GM13977 (cell line): ENCODE measurements at regions of chr11 and their contacts with region 1.

Region 1: DNA sequence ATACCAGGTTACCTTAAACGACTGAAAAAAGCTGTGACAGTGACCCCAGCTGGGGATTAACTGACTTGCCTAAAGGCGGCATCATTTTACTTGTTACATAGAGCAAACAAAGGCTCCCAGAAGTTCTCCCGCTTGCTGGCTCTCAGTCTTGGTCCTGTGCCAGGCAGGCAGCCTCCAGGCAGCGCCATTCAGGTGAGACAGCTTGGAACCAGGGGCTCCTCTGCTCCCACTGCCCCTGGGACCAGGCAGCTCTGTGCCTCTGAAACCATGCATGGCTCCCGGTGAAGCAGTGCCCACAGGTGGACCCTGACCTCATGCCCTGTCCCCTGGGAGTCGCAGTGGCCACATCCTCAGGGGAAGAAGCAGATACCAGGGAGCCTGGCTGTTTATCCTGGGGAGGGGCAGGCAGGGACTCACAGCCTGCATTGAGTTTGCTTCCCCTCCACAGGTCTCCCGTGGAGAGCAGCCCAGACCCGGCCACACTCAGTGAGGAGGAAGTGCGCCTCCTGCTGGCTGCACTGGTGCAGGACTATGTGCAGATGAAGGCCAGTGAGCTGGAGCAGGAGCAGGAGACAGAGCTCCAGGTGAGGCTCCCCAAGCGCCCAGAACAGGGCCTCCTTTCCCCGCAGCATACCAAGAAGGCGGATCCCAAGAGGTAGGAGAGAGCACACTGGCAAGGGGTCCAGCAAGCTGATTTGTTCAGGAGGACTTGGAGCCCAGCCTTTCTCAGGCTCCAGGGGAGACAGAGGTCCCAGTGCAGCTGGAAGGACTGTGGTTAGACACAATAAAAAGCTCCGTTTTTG is 15.6 kb upstream of the CYP2R1 start:
- DNase-seq: peak; percentile 41
- CTCF ChIP-seq: peak; percentile 92

Region 2: GRCh38 chr11:14537134-14537599 is 370.4 kb before region 1 on chr11:
- in situ Hi-C with region 1: loop called (anchors 10 kb)
- DNase-seq: peak; percentile 61
- CTCF ChIP-seq: peak; percentile 79

Region 3: DNA sequence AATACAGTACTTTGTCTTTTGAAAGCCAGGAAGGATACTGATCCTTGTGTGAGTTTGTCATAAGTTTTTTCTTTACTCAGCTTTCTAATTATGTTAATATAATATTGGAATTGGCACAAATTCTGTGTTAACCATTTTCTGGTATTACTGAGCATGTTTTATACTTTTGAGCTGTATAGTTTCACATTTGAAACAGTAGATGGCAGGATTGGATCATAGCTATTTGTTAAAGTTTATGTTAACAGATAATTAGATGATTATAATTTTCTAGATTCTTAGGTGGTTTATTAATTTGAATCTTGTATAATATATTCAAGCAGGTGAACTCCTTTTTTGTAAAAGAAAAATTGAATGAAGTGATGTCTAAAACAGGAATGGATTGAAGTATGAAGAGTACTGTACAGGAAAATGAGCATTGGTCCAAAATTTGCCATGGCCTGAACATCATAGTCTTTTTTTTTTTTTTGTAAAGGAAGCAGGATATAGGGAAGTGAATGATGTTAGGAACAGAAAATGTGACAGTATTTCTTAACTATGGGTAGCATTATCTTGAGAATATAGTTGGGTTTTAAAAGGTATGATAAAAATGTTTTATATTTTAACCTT is 117.6 kb before region 1 on chr11:
- in situ Hi-C with region 1: loop called (anchors 25 kb)
- DNase-seq: no peak
- CTCF ChIP-seq: peak; percentile 38

Region 4: DNA sequence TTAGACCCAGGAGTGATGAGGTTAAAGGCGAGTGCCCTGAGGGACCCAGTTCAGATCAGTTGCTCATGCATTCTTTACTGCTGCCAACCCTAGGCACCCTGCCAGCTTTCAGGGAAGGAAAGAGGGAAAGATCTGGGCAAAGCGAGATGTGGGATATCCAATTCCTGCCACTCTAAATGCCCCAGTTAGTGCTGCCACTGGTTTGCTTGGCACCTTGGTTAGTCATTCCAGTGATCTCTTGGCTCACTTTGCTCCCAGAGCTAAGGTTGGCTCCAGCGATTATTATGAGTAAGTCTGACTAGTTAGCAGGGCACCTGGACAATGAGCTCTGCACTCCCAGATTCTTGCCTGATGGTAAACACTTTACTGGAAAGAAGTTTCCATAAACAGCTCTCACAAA is 292.1 kb after region 1 on chr11:
- in situ Hi-C with region 1: loop called (anchors 25 kb)
- DNase-seq: no peak
- CTCF ChIP-seq: no peak

Region 5: GRCh38 chr11:15258433-15259165 is 351.0 kb after region 1 on chr11:
- in situ Hi-C with region 1: no loop called
- DNase-seq: no peak
- CTCF ChIP-seq: no peak

Region 6: GRCh38 chr11:15367695-15368094 is 460.1 kb after region 1 on chr11:
- in situ Hi-C with region 1: no loop called
- DNase-seq: no peak
- CTCF ChIP-seq: no peak